Activated T-helper 1 cell treated with anti-CD3 and anti-CD28 coated beads, Interleukin-12 subunit alpha, Interleukin-12 subunit beta, Interleukin-2, Interleukin-4 antibody, amounts not matched to agents 30 ng/mL and 10 ng/mL and 1 ng/mL, durations not matched to agents 14 hours and 24 hours and 36 hours (primary cell): ENCODE measurements at regions of chr5 and their contacts with region 1.

Region 1: DNA sequence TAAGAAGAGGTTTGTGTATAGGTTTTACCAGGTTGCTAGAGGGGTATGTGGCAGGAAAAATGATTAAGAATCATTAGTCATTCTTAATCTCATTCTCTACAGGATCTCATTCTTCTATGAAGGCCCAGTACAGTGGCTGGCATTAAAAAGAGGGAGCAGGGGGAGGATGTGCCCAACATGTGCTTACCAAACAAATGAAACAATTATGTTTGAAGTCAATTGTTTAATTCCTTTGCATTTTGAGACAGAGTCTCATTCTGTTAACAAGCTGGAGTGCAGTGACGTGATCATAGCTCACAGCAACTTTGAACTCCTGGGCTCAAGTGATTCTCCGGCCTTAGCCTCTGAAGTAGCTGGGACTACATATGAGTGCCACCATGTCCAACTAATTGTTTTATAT is 23.0 kb downstream of the FNIP1 start:
- DNase-seq: no peak
- H3K4me3 Mint-ChIP-seq: no peak overlapping the region
- H3K27ac Mint-ChIP-seq: no peak overlapping the region
- H3K4me1 Mint-ChIP-seq: no peaks in the 10 kb centered on the region
- H3K27me3 Mint-ChIP-seq: no peaks in the 10 kb centered on the region

Region 2: GRCh38 chr5:131735393-131735792 is 38.4 kb before region 1 on chr5:
- intact Hi-C with region 1: loop called (anchors 5 kb)
- DNase-seq: no peak
- H3K4me3 Mint-ChIP-seq: no peak overlapping the region
- H3K27ac Mint-ChIP-seq: no peak overlapping the region
- H3K4me1 Mint-ChIP-seq: no peaks in the 10 kb centered on the region
- H3K27me3 Mint-ChIP-seq: no peaks in the 10 kb centered on the region